Calu3 (cell line): ENCODE measurements at regions of chr4 and their contacts with region 1.

Region 1: DNA sequence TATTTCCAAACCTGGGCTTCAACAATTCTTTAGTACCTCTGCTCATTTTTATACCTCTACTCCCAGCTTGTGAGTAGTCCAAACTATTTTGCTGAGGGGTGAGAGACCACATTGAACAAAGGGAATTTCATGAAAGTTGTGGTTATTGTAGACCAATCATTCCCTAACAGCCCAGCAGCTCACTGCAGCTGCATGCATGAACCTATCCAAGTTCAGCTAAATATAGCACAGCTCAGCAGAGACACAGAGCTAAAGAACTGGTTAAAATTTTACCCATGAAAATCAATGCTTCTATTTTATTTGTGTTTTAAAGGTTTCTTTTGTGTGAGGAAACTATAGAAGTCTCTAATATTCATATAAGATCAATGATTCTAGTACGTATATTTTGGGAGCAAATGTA is 82.7 kb downstream of the TECRL start:
- DNase-seq: no peak
- H3K4me3 Mint-ChIP-seq: no peak overlapping the region
- H3K27ac Mint-ChIP-seq: no peak overlapping the region
- H3K4me1 Mint-ChIP-seq: no peaks in the 10 kb centered on the region
- H3K27me3 Mint-ChIP-seq: no peaks in the 10 kb centered on the region
- CTCF ChIP-seq: no peak

Region 2: DNA sequence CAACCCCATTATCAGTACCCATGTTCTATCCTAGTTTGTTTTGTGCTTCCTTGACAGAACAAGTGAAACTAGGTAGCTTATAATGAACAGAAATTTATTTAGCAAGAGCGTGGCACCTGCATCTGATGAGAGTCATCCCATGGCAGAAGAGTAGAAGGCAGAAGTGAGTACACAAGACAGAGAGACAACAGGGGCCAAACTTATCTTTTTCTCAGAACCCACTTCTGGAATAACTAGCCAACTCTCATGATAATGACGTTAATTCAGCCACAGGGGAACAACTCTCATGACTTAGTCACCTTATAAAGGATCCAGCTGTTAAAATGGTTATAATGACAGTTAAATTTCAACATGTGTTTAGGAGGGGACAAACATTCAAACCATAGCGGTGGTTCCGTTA is 562.1 kb before region 1 on chr4:
- CTCF ChIA-PET with region 1: interaction called, 10 read pairs
- intact Hi-C with region 1: no loop called
- DNase-seq: no peak
- H3K4me3 Mint-ChIP-seq: no peak overlapping the region
- H3K27ac Mint-ChIP-seq: no peak overlapping the region
- H3K4me1 Mint-ChIP-seq: no peaks in the 10 kb centered on the region
- H3K27me3 Mint-ChIP-seq: no peaks in the 10 kb centered on the region
- CTCF ChIP-seq: no peak